ENCODE measurements at regions of chr3 and their contacts with region 1.

Region 1: DNA sequence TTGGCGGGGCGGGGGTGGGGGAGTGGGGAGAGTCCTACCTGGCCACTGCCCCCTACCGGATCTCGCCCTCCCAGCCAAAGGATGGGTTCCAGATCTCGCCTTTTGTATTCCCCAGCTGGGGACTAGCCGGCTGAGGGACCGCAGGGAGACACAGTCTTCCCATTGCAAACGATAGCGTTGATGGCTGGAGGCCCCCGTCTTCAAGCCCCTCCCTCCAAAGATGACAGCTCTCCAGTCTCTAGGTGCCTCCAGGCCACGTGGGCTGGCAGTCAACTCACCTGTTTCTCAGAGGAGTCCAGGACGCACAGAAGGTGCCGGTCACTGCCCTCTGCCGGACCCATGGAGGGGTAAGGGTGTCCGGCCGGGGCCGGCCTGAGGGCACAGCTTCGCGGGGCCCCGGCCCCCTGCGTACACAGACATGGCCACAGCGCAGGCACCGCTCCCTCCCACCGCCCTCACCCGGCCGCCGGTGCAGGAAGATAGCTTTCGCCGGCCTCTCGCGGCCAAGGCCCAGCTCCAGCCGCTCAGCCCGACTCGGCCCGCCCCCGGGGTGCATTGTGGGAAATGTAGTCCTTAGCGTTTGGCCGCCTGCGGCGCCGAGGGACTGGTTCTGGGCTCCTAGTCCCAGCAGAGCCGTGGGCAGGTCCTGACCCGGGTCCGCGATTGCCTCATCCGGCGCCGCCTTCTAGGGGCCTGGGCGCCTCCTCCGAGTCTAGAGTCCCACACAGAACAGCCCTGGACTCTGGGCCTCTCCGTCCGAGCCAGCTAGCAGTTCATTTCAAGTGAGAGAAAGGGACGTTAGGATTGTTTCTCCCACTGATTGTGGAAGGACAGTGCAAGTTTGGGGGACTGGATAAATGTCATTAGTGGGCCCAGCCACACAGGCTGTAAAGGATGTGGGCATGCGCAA is at the start of gene MON1A:
- DNase-seq: peak; percentile 81 to 87 (median 83)
- H3K4me3 ChIP-seq: peak within 1 kb of the TSS; percentile 53 to 94 (median 83)
- H3K27ac ChIP-seq: peak within 1 kb of the TSS in 1 of 2 experiments; percentile 70
- H3K4me1 ChIP-seq: peaks cover 0 to 23% (median 14%) of the 10 kb centered on the region in 4 experiments
- H3K27me3 ChIP-seq: no peaks in the 10 kb centered on the region

Region 2: DNA sequence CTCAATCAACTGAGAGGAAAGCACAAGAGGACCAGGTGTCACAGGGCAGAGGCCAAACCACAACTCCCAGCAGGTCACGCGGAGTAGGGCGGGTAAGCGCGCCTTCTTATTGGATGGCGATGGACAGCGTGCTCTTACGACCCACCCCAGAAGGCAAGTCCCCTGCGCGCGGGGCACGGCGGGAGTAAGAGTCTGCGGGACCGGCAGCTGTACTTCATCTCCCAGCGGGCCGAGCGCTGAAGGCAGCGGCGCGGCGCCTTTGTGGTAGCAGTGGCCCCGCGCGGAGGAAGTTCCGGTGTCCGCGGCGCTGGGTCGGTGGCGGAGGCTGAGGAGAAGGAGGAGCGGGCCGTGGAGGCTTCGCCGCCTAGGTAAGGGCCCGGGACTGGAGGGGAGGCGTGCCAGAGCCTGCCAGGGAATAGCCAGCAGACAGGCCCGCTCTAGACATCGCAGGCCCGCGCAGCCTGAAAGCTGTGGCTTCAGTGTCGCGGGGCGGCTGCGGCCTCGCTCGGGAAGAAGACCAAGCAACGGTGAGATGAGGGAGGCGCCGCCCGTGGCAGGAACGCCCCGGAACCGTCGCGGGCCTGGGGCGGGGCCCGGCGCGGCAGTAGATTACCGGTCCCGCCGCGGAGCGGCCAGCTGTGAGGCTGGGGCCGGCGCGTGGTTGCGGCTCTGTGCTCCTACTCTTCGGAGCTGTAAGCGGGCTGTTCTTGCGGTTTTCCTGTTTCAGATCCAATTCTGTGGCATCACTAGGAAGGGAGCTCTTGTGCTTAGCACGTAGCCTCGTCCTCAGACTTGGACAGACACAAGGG is 10.5 kb after region 1 on chr3 and contains the start of gene RBM6:
- CTCF ChIA-PET with region 1: interaction called, 5 read pairs
- POLR2A ChIA-PET with region 1: interaction called, 11 read pairs
- DNase-seq: peak; percentile 96 to 99 (median 97)
- H3K4me3 ChIP-seq: peak within 1 kb of the TSS; percentile 57 to 98 (median 92)
- H3K27ac ChIP-seq: peak within 1 kb of the TSS; percentile 70 to 90
- H3K4me1 ChIP-seq: peaks cover 5 to 17% (median 14%) of the 10 kb centered on the region in 4 experiments
- H3K27me3 ChIP-seq: no peaks in the 10 kb centered on the region

Measured in common myeloid progenitor, CD34-positive (primary cell).